Dorsolateral prefrontal cortex (tissue), 120 donors: ENCODE measurements at regions of chr1 and their contacts with region 1.

Region 1: DNA sequence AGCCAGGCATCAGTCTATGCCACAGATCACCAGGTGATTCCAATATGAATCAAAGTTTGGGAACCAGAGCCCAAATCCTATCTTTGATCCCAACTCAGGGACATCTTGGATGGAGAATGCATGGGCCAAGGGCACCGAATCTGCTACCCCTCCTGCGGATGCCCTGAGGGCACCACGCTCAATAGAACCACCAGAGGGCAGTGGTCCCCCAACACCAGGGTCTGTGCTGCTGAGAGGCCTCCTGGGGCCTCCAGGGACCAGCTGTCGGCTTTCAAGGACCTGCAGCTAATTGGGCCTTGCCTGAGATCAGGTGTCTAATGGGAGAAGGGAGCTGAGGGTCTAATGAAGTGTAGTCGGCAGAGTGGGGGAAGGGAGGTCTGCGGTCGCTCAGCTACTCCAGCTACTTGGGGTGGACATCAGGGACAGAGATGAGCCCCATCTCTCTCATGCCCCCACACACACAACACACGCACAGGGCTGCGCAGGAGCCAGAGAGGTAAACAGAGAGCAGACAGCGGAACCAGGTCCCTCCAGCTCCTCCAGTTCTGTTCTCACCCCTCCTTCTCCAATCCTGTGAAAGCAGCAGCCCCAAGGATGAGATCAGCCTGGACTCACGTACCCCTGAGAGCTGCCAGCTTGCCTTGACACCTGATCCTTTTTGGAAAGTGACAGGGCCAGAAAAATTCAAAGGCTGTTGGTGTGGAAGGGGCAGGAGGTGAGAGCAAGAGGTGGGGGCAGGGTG is 34.9 kb upstream of the PPP1R15B start:
- DNase-seq: peak; percentile 24 to 86 (median 76)
- H3K4me3 ChIP-seq: no peak overlapping the region
- H3K27ac ChIP-seq: peak overlapping the region; percentile 30 to 99 (median 79)
- H3K27me3 ChIP-seq: no peaks in the 10 kb centered on the region
- CTCF ChIP-seq: peak; percentile 37 to 92 (median 83)

Region 2: GRCh38 chr1:204465546-204466415 is 19.2 kb after region 1 on chr1:
- intact Hi-C with region 1: loop called in 1 of 2 experiments (anchors 2 kb)
- DNase-seq: peak in 3 of 10 donors; percentile 28 to 58 (median 39)
- H3K4me3 ChIP-seq: peak overlapping the region in 8 of 59 donors; percentile 2 to 38 (median 16)
- H3K27ac ChIP-seq: peak overlapping the region; percentile 85 to 100 (median 98)
- H3K27me3 ChIP-seq: no peaks in the 10 kb centered on the region
- CTCF ChIP-seq: no peak

Region 3: GRCh38 chr1:204494281-204495077 is 47.9 kb after region 1 on chr1 and contains the start of gene PIK3C2B:
- intact Hi-C with region 1: loop called in 1 of 2 experiments (anchors 2 kb)
- DNase-seq: peak; percentile 67 to 89 (median 84)
- H3K4me3 ChIP-seq: peak within 1 kb of the TSS; percentile 67 to 99 (median 91)
- H3K27ac ChIP-seq: peak within 1 kb of the TSS; percentile 84 to 99 (median 97)
- H3K27me3 ChIP-seq: no peaks in the 10 kb centered on the region
- CTCF ChIP-seq: peak; percentile 2 to 68 (median 49)
- total RNA-seq, gene PIK3C2B: 38.4 to 188 (median 62.6) TPM

Region 4: GRCh38 chr1:204506961-204507387 is 60.4 kb after region 1 on chr1:
- intact Hi-C with region 1: loop called (anchors 1 to 5 kb)
- DNase-seq: peak in 8 of 10 donors; percentile 66 to 87 (median 79)
- H3K4me3 ChIP-seq: peak overlapping the region; percentile 51 to 96 (median 73)
- H3K27ac ChIP-seq: peak overlapping the region; percentile 66 to 100 (median 96)
- H3K27me3 ChIP-seq: no peaks in the 10 kb centered on the region
- CTCF ChIP-seq: peak in 5 of 56 donors; percentile 6 to 24 (median 13)

Region 5: DNA sequence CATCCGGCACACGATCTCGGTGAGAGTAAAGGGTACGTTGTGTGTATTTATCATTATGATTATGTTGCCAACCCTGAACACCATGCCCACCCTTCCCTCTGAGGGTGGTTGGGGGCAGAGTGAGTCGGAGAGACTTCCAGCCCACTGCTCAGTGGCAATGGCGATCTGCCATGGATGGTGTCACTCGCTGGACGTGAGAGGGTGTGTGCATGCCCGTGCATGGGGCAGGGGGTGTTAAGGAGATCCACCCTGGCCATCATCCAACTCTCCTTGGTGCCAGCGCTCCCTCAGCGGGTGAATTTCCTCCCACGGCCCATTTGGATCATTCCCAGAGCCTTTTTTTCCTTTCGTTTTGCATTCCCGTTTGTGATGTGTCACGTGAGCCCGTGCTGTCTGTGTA is 522.4 kb after region 1 on chr1:
- intact Hi-C with region 1: loop called in 1 of 2 experiments (anchors 5 kb)
- DNase-seq: no peak
- H3K4me3 ChIP-seq: peak overlapping the region in 5 of 59 donors; percentile 7 to 37 (median 19)
- H3K27ac ChIP-seq: peak overlapping the region in 46 of 59 donors; percentile 0 to 82 (median 55)
- H3K27me3 ChIP-seq: no peaks in the 10 kb centered on the region
- CTCF ChIP-seq: no peak